ENCODE measurements at regions of chr4 and their contacts with region 1.

Region 1: DNA sequence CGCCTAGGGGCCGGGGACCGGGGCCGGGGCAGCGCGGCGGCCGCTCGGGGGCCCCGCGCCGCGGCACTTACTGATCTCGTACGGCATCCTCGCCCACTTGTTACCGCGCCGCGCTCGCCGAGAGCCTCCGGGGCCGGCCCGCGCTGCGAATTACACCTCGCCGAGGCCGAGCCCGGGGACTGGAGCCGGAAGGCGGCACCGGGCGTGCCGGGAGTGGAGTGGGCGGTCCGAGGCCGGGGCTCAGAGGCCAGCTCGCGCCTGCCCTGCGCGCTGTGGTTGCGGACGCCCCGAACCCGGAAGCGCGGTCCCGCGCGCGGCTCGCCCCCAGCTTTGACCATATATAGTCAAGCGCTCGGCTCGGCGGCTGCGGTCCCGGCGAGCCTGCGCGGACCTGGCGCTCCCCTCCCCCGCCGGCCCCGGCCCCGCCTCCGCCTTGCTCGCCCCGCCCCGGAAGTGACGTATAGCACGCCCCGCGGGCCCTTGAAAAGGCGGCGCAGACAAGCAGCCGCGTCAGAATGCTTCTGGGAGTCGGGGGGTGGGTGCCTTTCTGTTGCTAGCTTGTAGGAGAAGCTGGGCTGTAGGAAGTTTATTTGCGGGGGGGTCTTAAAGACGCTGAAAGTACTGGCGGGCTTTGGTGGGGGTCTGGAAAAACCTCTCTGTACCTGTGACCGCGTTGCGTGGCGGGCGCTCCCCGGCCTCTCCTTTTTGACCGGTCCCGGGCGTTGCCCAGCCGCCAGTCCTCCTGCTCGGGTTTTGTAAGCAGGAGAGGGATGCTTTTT is at the start of gene WDR1:
- DNase-seq: peak; percentile 95
- CTCF ChIP-seq: no peak

Region 2: GRCh38 chr4:10074767-10075105 is 42.0 kb before region 1 on chr4:
- CTCF ChIA-PET with region 1: no interaction called
- POLR2A ChIA-PET with region 1: no interaction called
- DNase-seq: peak; percentile 19
- CTCF ChIP-seq: peak; percentile 28

Region 3: GRCh38 chr4:10096201-10096977 is 20.4 kb before region 1 on chr4:
- CTCF ChIA-PET with region 1: interaction called, 5 read pairs
- POLR2A ChIA-PET with region 1: interaction called, 69 read pairs
- DNase-seq: peak; percentile 86
- CTCF ChIP-seq: no peak

Region 4: GRCh38 chr4:10129196-10130177 is 12.7 kb after region 1 on chr4:
- CTCF ChIA-PET with region 1: interaction called, 22 read pairs
- POLR2A ChIA-PET with region 1: interaction called, 7 read pairs
- DNase-seq: no peak
- CTCF ChIP-seq: no peak

Region 5: DNA sequence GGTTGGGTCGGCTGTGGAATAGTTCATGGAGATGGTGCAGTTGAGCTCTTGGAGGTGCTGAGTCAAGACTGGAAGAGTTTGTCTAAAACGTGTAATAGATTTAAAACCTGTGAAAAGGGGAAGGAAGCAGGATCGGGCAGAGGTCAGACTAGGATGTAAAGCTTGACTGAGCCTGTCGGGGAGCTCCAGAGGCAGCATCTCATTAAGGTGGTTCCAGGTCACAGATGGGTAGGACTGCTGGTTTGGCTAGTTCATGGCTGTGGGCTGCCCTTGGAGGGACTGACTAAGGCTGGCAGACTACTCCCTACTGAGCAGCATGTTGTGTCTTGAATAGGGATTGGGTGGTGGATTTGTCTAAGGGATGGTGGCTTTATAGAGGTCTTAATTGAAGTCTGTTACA is 28.2 kb after region 1 on chr4:
- CTCF ChIA-PET with region 1: interaction called, 7 read pairs
- POLR2A ChIA-PET with region 1: interaction called, 10 read pairs
- DNase-seq: no peak
- CTCF ChIP-seq: no peak